GM23248 (cell line): ENCODE measurements at regions of chr6 and their contacts with region 1.

Region 1: DNA sequence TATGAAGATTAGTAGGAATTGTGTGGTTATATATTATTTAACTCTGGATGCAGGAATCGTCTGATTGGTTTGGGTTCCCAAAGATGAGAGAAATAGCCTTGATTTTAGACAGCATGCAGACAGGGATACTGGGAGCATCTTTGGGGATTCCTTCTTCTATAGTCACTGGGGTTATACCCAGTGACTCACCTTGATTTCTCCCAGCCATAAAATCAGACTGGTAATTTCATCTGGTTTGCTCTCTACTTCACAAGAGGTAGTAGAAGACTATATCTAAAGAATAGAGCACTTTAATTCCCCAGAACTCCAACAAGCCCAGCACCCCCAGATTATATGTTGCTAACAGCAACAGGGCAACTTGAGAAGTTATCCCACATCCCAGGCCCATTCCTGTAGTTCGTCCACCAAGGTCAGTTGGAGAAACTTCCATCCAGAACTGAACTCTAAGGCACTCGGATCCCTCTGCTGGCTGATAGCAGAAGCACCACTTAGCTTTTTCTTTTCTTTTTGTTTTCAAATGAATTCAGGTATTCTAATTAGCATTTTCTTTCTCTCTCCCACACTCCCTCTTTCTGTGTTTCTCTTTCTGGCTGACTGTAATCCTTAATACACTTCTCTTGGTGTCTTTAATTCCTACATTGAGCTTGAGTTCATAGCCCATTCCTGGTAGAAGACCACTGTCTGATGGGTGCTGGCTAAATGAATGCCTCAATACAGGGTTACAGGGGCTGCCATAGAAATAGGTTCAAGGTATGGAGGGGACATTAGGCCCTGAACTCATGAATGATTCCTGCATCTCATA is 20.4 kb upstream of the EFHC1 start:
- DNase-seq: peak; percentile 83
- H3K4me3 ChIP-seq: no peak overlapping the region
- H3K27ac ChIP-seq: no peak overlapping the region
- H3K4me1 ChIP-seq: peaks cover 7% of the 10 kb centered on the region
- H3K27me3 ChIP-seq: no peaks in the 10 kb centered on the region

Region 2: GRCh38 chr6:51704932-51705540 is 694.7 kb before region 1 on chr6:
- in situ Hi-C with region 1: no loop called
- DNase-seq: no peak
- H3K4me3 ChIP-seq: no peak overlapping the region
- H3K27ac ChIP-seq: no peak overlapping the region
- H3K4me1 ChIP-seq: no peaks in the 10 kb centered on the region
- H3K27me3 ChIP-seq: no peaks in the 10 kb centered on the region

Region 3: DNA sequence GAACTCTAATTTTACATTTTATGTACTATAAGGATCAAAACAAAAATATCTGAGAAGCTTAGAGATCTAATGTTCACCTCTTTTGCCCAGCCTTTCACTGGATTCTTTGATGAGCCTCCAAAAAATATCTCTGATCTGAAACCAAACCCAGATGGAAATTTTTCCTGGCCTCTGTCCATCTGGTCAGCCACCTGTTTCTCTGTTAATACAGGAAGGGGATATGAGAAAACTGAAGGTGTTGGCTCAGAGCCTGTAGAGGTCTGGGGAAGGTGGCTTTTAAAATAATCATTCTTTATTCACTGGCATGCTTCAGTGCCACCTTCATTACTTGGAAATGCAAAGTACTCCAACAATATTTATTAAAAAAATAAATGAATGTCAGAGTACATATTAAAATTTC is 106.6 kb before region 1 on chr6:
- in situ Hi-C with region 1: loop called (anchors 5 kb)
- DNase-seq: no peak
- H3K4me3 ChIP-seq: no peak overlapping the region
- H3K27ac ChIP-seq: no peak overlapping the region
- H3K4me1 ChIP-seq: no peaks in the 10 kb centered on the region
- H3K27me3 ChIP-seq: no peaks in the 10 kb centered on the region

Region 4: DNA sequence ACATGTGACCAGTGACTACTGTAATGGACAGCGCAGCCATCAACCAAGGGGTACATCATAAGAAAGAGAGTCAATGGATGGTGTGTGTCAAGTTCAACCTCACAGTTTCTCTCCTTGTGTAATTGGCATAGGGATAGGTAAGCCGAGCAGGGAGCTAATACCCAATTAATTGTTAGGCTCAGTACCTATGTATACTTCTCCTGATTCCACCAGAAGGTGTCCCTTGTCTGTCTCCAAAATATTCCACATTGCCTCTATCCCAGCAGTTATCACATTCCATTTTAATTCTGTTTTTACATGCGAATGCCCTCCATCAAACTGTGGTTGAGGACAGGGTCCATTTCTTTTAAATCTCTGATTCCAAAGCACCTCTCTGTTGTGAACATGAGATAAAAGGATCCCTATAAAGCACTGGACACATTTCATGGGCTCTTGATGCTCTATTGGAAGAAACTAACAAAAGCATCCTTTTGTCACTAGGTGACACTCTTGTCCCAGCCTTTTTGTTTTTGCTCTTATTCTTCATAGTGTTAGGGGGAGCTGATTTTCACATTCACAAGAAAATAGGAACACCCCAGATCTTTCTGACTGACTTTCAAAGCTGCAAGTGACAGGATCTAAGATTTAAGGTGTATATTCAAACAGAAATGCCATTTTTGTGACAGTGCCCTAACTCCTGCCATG is 704.4 kb after region 1 on chr6:
- in situ Hi-C with region 1: no loop called
- DNase-seq: peak; percentile 26
- H3K4me3 ChIP-seq: no peak overlapping the region
- H3K27ac ChIP-seq: no peak overlapping the region
- H3K4me1 ChIP-seq: peaks cover 22% of the 10 kb centered on the region
- H3K27me3 ChIP-seq: no peaks in the 10 kb centered on the region